Activated CD8-positive, alpha-beta T cell treated with anti-CD3 and anti-CD28 coated beads for 36 hours (primary cell): ENCODE measurements at regions of chr15 and their contacts with region 1.

Region 1: DNA sequence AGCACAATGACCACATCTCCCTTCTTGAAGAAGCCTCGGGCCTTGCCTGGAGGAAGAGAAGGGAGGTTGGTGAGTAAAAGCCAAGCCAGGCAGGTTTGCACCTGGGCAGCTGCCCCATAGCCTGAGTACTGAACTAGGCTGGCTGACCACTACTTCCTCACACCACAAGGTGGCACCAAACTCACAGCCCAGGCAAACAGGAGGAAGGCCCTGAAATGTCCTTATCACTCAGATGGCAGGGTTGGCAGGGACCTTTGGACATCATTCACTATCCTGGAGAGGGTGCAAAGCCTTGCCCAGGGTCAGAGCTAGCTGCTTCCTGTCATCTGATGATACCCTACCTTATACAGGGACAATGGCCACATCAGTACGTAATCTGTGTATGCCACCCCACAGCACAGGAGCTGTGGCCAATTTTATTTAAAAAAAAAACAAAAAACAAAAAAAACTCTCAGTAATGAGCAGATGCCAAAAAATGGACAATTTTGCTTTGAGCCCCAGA is 2.2 kb upstream of the GRAMD2A start:
- DNase-seq: peak; percentile 82
- ATAC-seq: peak; percentile 52
- H3K4me3 Mint-ChIP-seq: no peak overlapping the region
- H3K27ac Mint-ChIP-seq: no peak overlapping the region
- H3K4me1 Mint-ChIP-seq: peaks cover 23% of the 10 kb centered on the region
- H3K27me3 Mint-ChIP-seq: peaks cover 11% of the 10 kb centered on the region
- CTCF ChIP-seq: peak; percentile 73

Region 2: DNA sequence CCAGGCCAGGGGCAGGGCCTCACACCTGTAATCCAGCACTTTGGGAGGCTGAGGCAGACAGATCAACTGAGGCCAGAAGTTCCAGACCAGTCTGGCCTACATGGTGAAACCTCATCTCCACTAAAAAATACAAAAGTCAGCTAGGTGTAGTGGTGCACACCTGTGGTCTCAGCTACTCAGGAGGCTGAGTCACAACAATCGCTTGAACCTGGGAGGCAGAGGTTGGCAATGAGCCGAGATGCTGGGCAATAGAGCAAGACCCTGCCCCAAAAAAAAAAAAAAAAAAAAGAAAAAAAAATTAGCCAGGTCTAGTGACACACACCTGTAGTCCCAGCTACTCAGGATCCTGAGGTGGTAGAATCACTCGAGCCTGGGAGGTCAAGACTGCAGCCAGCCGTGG is 100.6 kb before region 1 on chr15:
- CTCF ChIA-PET with region 1: no interaction called
- POLR2A ChIA-PET with region 1: no interaction called
- intact Hi-C with region 1: no loop called
- DNase-seq: no peak
- ATAC-seq: no peak
- H3K4me3 Mint-ChIP-seq: no peak overlapping the region
- H3K27ac Mint-ChIP-seq: no peak overlapping the region
- H3K4me1 Mint-ChIP-seq: peaks cover 2% of the 10 kb centered on the region
- H3K27me3 Mint-ChIP-seq: no peaks in the 10 kb centered on the region
- CTCF ChIP-seq: no peak

Region 3: DNA sequence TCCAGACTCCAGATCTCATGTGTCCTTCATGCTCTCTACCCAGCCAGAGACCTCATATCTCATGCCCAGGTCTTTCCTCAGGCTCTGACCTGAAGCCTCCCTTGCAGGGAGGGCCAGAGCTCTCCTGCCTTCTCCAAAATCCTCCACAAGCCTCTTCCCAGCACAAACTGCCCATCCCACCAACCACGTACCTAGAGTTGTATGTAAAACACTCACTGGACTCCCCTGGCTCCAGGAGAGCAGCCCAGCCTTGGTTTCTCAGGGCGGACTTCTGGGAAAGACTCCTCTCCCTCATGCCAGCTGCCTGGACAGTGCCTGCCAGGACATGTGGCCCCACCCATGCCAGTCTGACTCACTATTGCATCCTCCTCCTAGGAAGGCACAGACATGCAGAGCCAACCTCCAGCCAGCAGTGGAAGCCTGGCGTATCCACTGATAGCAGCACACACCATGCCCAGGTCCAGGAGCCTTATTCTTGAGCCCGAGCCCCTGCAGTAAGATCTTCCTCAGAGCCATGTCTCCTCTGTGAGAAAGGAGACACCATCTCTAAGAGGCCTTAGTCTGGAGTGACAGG is 22.6 kb after region 1 on chr15:
- CTCF ChIA-PET with region 1: interaction called, 35 read pairs
- POLR2A ChIA-PET with region 1: interaction called, 23 read pairs
- intact Hi-C with region 1: no loop called
- DNase-seq: no peak
- ATAC-seq: no peak
- H3K4me3 Mint-ChIP-seq: peak overlapping the region; percentile 40
- H3K27ac Mint-ChIP-seq: peak overlapping the region; percentile 84
- H3K4me1 Mint-ChIP-seq: peaks cover 80% of the 10 kb centered on the region
- H3K27me3 Mint-ChIP-seq: no peaks in the 10 kb centered on the region
- CTCF ChIP-seq: no peak

Region 4: DNA sequence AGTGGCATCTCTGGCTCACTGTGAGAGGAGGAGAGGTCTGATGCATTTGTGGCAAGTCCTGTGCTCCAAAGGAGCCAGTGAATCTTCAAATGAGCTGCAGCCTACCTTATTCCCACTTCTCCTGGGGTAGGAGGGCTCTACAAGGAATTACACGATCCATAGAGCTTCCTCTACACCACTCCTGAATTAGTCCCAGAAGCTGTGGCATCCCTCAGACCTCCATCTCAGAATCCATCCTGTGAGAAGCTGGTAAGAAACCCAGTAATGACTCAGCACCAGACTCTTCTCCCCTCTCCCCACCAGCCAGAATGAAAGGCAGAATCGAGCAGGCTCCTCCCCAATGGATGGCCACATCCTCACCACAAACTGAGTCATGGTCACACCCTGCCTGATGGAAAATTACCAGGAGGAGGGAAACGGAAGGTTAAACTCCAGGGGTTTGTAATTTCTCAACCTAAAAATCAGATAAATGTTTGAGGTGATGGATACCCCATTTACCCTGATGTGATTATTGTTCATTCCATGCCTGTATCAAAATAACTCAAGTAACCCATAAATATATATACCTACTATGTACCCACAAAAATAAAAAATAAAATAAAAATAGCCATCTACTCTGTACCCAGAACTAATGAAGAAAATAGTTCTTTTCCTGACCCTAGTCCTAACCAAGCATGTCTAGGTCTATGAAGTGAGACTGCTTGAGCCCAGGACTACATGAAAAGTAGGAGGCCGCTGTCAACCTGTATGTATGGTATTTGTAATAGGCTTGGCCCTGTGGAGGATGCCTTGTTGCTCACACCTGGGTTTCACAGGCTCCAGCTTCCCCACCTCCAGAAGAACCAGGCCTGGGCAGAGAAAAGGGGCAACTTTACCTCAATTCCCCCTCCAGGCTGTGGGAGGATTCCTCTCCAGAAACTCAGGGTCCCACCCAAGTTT is 37.8 kb after region 1 on chr15:
- CTCF ChIA-PET with region 1: interaction called, 13 read pairs
- POLR2A ChIA-PET with region 1: interaction called, 14 read pairs
- intact Hi-C with region 1: no loop called
- DNase-seq: peak; percentile 89
- ATAC-seq: peak; percentile 96
- H3K4me3 Mint-ChIP-seq: peak overlapping the region; percentile 66
- H3K27ac Mint-ChIP-seq: peak overlapping the region; percentile 91
- H3K4me1 Mint-ChIP-seq: peaks cover 42% of the 10 kb centered on the region
- H3K27me3 Mint-ChIP-seq: peaks cover 1% of the 10 kb centered on the region
- CTCF ChIP-seq: no peak

Region 5: GRCh38 chr15:72285927-72286516 is 86.3 kb after region 1 on chr15:
- CTCF ChIA-PET with region 1: interaction called, 34 read pairs
- POLR2A ChIA-PET with region 1: no interaction called
- intact Hi-C with region 1: no loop called
- DNase-seq: peak; percentile 56
- ATAC-seq: peak; percentile 72
- H3K4me3 Mint-ChIP-seq: no peak overlapping the region
- H3K27ac Mint-ChIP-seq: no peak overlapping the region
- H3K4me1 Mint-ChIP-seq: peaks cover 4% of the 10 kb centered on the region
- H3K27me3 Mint-ChIP-seq: no peaks in the 10 kb centered on the region
- CTCF ChIP-seq: peak; percentile 66